Activated naive CD4-positive, alpha-beta T cell treated with anti-CD3 and anti-CD28 coated beads for 36 hours (primary cell): ENCODE measurements at regions of chr16 and their contacts with region 1.

Region 1: GRCh38 chr16:50210266-50211038 is 55.9 kb upstream of the ADCY7 start:
- DNase-seq: peak; percentile 88
- H3K4me3 Mint-ChIP-seq: no peak overlapping the region
- H3K27ac Mint-ChIP-seq: peak overlapping the region; percentile 59
- H3K4me1 Mint-ChIP-seq: peaks cover 32% of the 10 kb centered on the region
- H3K27me3 Mint-ChIP-seq: no peaks in the 10 kb centered on the region

Region 2: DNA sequence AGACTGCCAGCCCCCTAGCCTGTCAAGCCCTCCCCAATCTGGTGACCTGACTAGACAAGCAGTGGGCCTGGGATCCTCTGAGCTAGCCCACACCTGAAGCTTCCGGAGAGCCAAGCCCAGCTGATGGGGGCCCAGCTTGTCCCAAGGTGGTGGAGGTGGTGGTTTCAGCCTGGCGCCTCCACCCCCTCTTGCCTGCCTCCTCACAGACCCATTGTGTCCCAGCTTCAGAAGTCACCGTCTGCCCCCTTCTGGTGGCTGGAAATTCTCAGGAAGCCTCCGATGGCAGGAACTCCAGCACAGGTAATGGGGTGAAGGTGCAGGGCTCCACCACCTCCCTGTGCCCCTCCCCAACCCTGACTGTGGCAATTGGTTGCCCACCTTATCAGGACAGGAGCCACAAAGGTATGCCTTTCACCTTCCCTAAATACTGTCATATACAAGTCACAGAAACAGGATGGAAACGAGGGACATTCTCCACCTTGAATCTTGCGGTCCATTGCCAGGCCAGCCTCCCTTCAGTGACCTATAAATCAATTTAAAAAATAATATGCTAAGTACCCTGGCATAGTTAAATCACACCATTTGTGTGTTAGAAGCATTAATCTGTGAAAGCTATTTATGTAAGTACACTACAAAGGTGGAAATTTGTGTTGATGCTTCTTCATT is 288.5 kb before region 1 on chr16:
- CTCF ChIA-PET with region 1: no interaction called
- intact Hi-C with region 1: no loop called
- DNase-seq: peak; percentile 70
- H3K4me3 Mint-ChIP-seq: no peak overlapping the region
- H3K27ac Mint-ChIP-seq: no peak overlapping the region
- H3K4me1 Mint-ChIP-seq: no peaks in the 10 kb centered on the region
- H3K27me3 Mint-ChIP-seq: peaks cover 3% of the 10 kb centered on the region

Region 3: DNA sequence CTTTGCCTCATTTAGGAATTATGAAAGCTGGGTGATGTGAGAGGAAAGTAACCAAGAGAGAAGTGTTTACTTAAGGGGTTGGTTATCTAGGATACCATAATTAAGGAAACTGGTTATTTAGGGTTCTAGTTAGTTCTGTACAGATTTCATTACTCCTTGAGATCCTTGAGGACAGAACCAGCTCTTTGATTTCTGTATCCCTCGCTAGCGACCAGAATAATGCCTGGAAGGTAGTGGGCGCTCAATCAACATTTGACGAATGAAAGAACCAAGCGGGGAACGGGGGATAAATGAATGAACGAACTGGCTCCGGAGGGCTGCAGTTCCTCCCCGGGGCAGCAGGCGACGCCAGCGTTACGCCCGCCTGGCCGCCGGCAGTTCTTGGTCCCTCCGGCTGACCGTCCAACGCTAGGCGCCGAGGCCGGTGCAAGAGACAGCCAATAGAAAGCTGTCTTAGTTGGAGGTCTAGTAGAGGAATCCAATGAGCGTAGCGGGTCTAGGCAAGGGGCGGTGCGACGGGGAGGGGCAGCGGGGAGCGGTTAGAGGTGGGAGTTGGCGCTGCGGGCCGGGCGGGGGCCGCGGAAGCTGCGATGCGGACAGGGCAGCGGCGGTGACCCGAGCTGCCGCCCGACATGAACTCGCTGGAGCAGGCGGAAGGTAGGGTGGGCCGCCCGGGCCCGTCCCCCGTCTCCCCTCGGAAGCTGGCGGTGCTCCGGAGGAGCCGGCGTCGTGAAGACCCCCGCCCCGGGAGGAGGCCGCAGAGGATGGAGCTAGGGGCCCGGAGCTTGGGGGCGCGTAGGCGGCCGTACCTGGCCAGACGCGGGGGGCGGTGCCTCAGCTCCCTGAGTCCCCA is 185.5 kb before region 1 on chr16 and contains the start of gene CNEP1R1:
- CTCF ChIA-PET with region 1: interaction called, 117 read pairs
- intact Hi-C with region 1: loop called (anchors 1 kb)
- DNase-seq: peak; percentile 94
- H3K4me3 Mint-ChIP-seq: peak within 1 kb of the TSS; percentile 91
- H3K27ac Mint-ChIP-seq: peak within 1 kb of the TSS; percentile 82
- H3K4me1 Mint-ChIP-seq: peaks cover 22% of the 10 kb centered on the region
- H3K27me3 Mint-ChIP-seq: no peaks in the 10 kb centered on the region
- total RNA-seq, gene CNEP1R1: 28.2 to 30.9 TPM

Region 4: GRCh38 chr16:50136399-50136798 is 74.1 kb before region 1 on chr16:
- CTCF ChIA-PET with region 1: interaction called, 35 read pairs
- intact Hi-C with region 1: loop called (anchors 1 kb)
- DNase-seq: no peak
- H3K4me3 Mint-ChIP-seq: no peak overlapping the region
- H3K27ac Mint-ChIP-seq: no peak overlapping the region
- H3K4me1 Mint-ChIP-seq: no peaks in the 10 kb centered on the region
- H3K27me3 Mint-ChIP-seq: no peaks in the 10 kb centered on the region

Region 5: GRCh38 chr16:50326949-50327402 is 116.5 kb after region 1 on chr16:
- CTCF ChIA-PET with region 1: interaction called, 4 read pairs
- intact Hi-C with region 1: loop called (anchors 1 kb)
- DNase-seq: peak; percentile 81
- H3K4me3 Mint-ChIP-seq: no peak overlapping the region
- H3K27ac Mint-ChIP-seq: peak overlapping the region; percentile 50
- H3K4me1 Mint-ChIP-seq: peaks cover 56% of the 10 kb centered on the region
- H3K27me3 Mint-ChIP-seq: no peaks in the 10 kb centered on the region

Region 6: DNA sequence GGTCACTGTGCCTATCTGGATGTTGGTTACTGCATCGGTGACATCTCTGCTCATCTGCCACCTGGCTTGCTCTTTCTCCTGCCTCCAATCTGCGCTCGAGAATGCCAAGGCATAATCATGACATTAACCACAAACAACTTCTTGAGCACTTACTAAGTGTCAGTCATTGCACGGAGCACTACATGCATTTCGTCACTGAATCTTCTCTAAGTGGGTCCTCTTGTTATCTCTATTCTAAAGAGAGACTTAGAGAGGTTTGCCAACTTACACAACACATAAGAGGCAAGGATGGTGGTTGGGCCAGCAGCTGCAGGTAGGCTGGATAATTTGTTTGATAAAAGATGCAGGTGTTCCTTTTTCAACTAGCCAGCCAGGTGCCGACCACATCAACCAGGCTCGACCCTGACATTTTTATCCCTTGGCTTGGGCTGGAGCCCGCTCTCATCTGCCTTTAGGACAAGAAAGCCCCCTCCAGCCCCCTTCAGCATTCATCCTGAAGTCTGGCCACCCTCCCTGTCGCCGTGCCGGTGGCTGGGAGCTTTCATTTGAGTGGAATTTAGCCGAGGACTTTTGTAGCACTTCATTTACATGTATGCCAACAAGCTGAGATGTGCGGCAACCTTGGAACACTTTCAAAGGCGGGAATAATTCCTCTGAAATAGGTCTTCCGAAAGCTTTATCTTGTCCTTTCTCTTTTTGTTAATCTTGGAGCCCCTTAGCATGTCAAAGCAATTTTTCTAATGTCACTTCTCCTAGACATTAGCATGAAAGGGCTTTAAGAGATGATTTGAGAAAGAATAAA is 248.4 kb after region 1 on chr16:
- CTCF ChIA-PET with region 1: no interaction called
- intact Hi-C with region 1: no loop called
- DNase-seq: no peak
- H3K4me3 Mint-ChIP-seq: no peak overlapping the region
- H3K27ac Mint-ChIP-seq: no peak overlapping the region
- H3K4me1 Mint-ChIP-seq: peaks cover 12% of the 10 kb centered on the region
- H3K27me3 Mint-ChIP-seq: no peaks in the 10 kb centered on the region

Region 7: GRCh38 chr16:50509521-50510341 is 299.3 kb after region 1 on chr16:
- CTCF ChIA-PET with region 1: interaction called, 3 read pairs
- intact Hi-C with region 1: loop called (anchors 1 kb)
- DNase-seq: peak; percentile 67
- H3K4me3 Mint-ChIP-seq: no peak overlapping the region
- H3K27ac Mint-ChIP-seq: no peak overlapping the region
- H3K4me1 Mint-ChIP-seq: no peaks in the 10 kb centered on the region
- H3K27me3 Mint-ChIP-seq: no peaks in the 10 kb centered on the region

Region 8: DNA sequence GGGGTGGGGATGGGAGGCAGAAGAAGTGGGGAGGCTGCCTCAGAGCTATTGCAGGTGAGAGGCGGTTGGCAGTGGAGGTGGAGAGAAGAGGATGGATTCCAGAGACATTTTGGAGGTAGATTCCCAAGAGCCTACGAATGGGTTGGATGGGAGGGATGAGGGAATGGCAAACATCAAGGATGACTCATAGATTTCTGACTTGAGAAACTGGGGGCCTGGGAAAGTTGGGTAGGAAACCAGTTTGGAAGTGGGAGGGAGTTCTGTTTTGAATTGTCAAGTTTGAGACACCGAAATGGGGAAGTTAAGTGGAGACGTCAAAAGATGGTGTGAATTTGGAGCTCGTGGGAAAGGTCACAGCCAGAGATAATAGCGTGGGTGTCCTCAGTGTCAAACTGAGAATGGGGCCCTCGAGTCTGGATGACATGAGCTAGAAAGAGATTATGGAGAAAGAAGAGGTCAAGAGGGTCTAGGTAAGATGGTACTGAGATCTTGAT is 525.2 kb after region 1 on chr16:
- CTCF ChIA-PET with region 1: no interaction called
- intact Hi-C with region 1: no loop called
- DNase-seq: peak; percentile 18
- H3K4me3 Mint-ChIP-seq: no peak overlapping the region
- H3K27ac Mint-ChIP-seq: no peak overlapping the region
- H3K4me1 Mint-ChIP-seq: peaks cover 38% of the 10 kb centered on the region
- H3K27me3 Mint-ChIP-seq: no peaks in the 10 kb centered on the region

Region 9: DNA sequence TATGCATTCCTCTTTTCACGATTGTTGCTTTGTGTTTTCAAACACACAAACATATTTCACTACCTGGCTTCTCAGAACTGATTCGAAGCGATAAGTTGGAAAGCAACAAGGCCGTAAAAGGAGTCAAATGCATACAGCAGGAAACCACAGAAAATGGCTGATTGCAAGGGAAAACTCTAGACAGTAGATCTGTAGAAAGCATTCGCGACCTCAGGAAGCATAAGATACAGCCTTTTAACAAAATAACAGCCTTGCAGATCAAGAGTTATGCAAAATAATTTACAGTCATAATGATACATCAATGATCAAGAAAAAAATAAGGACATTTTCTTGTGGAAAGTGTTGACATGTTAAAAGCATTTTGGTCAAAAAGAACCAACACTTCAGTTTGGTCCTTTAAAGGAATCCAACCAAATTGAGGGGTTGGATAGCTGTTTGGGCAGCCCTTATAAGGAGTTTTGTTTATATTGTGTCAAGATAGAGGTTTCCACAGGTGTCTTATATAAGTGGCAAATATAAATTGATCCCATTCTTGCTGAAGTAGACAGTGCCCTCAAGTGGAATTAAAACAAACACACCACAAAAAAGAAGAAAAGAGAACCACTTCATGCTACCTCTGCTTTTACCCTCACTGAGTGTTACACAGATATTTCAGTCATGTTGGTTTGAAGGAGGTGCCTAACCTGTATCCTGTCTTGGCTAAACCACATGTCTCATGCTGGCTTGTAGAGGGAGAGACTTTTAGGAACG is 536.9 kb after region 1 on chr16:
- CTCF ChIA-PET with region 1: no interaction called
- intact Hi-C with region 1: loop called (anchors 2 kb)
- DNase-seq: peak; percentile 27
- H3K4me3 Mint-ChIP-seq: peak overlapping the region; percentile 67
- H3K27ac Mint-ChIP-seq: peak overlapping the region; percentile 93
- H3K4me1 Mint-ChIP-seq: peaks cover 62% of the 10 kb centered on the region
- H3K27me3 Mint-ChIP-seq: no peaks in the 10 kb centered on the region